Sigmoid colon (tissue), 7 donors: ENCODE measurements at regions of chr3 and their contacts with region 1.

Region 1: DNA sequence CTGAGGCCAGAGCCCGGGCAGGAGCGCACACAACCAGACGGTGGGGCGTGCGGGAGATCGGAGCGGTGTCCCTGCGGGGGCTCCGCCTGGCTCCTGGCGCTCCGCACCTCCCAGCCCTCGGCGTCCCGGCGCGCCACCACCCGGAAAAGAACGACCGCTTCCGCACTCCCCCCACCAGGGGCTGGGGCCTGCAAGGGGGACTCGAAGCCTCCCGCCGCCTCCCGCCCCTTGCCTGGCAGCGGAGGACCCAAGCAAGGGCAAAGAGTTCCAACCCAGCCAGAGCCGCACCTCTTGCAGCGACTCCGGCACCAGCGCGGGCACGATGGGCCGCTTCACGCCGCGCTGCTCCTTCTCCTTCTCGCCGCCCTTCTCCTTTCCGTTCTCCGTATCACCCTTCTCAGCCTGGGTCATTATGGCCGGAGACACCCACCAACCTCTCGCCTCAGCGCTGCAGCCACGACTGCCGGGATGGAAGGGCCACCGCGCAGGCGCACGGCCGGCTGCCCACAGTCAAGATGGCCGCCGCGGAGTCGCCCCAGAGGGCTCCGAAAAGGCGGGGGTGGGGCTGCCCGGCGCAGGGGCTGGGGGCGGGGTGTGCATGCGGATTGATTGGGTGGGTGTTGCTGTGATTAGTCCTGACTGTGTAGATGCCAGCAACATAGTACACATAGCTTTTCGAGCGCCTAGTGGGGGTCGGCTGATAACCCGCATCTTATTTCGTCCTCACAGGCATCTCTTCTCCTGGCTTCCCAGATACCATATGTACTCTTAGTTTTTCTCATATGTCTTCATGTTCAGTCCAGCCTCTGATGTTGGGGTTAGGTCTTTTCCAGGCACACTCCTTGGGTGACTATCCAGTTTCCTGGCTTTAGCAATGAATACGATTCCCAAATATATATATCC is at the start of gene ACTR8:
- DNase-seq: peak; percentile 92
- H3K4me3 ChIP-seq: peak within 1 kb of the TSS; percentile 70 to 87 (median 77)
- H3K27ac ChIP-seq: peak within 1 kb of the TSS; percentile 83 to 90 (median 86)
- H3K4me1 ChIP-seq: peaks cover 0 to 16% (median 12%) of the 10 kb centered on the region in 4 donors
- H3K27me3 ChIP-seq: no peaks in the 10 kb centered on the region
- CTCF ChIP-seq: peak in 1 of 4 experiments; percentile 10
- EP300 ChIP-seq: no peak
- POLR2A ChIP-seq: peak in 1 of 2 donors; percentile 46
- total RNA-seq, gene ACTR8: 18.5 to 30.7 (median 20.4) TPM

Region 2: GRCh38 chr3:53493963-53494791 is 387.8 kb before region 1 on chr3 and contains the start of gene CACNA1D:
- intact Hi-C with region 1: loop called (anchors 10 kb)
- DNase-seq: no peak
- H3K4me3 ChIP-seq: peak within 1 kb of the TSS; percentile 47 to 64 (median 60)
- H3K27ac ChIP-seq: peak within 1 kb of the TSS in 3 of 4 donors; percentile 53 to 66 (median 65)
- H3K4me1 ChIP-seq: peaks cover 0 to 52% (median 48%) of the 10 kb centered on the region in 4 donors
- H3K27me3 ChIP-seq: peaks cover 0 to 12% (median 0%) of the 10 kb centered on the region in 3 donors
- CTCF ChIP-seq: no peak
- EP300 ChIP-seq: no peak
- POLR2A ChIP-seq: no peak
- total RNA-seq, gene CACNA1D: 4.8 to 9.7 (median 5.4) TPM

Region 3: GRCh38 chr3:53513556-53514190 is 368.3 kb before region 1 on chr3:
- intact Hi-C with region 1: loop called (anchors 10 kb)
- DNase-seq: no peak
- H3K4me3 ChIP-seq: no peak overlapping the region
- H3K27ac ChIP-seq: no peak overlapping the region
- H3K4me1 ChIP-seq: peaks cover 0 to 9% (median under 1%) of the 10 kb centered on the region in 4 donors
- H3K27me3 ChIP-seq: no peaks in the 10 kb centered on the region
- CTCF ChIP-seq: no peak
- EP300 ChIP-seq: no peak
- POLR2A ChIP-seq: no peak

Region 4: GRCh38 chr3:53748512-53749271 is 133.2 kb before region 1 on chr3:
- intact Hi-C with region 1: no loop called
- DNase-seq: peak; percentile 52
- H3K4me3 ChIP-seq: no peak overlapping the region
- H3K27ac ChIP-seq: peak overlapping the region in 2 of 4 donors; percentile 18 to 31
- H3K4me1 ChIP-seq: no peaks in the 10 kb centered on the region
- H3K27me3 ChIP-seq: no peaks in the 10 kb centered on the region
- CTCF ChIP-seq: no peak
- EP300 ChIP-seq: no peak
- POLR2A ChIP-seq: no peak